ENCODE measurements at regions of chr2 and their contacts with region 1.

Region 1: GRCh38 chr2:54859997-54860686 is 136.7 kb downstream of the EML6 start:
- DNase-seq: no peak
- ATAC-seq: no peak
- H3K4me3 Mint-ChIP-seq: no peak overlapping the region
- H3K27ac Mint-ChIP-seq: no peak overlapping the region
- H3K4me1 Mint-ChIP-seq: no peaks in the 10 kb centered on the region
- H3K27me3 Mint-ChIP-seq: no peaks in the 10 kb centered on the region
- CTCF ChIP-seq: no peak

Region 2: GRCh38 chr2:54876764-54877163 is 16.6 kb after region 1 on chr2:
- CTCF ChIA-PET with region 1: interaction called, 3 read pairs
- POLR2A ChIA-PET with region 1: no interaction called
- intact Hi-C with region 1: loop called (anchors 1 kb)
- DNase-seq: no peak
- ATAC-seq: no peak
- H3K4me3 Mint-ChIP-seq: no peak overlapping the region
- H3K27ac Mint-ChIP-seq: no peak overlapping the region
- H3K4me1 Mint-ChIP-seq: no peaks in the 10 kb centered on the region
- H3K27me3 Mint-ChIP-seq: no peaks in the 10 kb centered on the region
- CTCF ChIP-seq: no peak